HepG2 (cell line): ENCODE measurements at regions of chr2 and their contacts with region 1.

Region 1: GRCh38 chr2:42974721-42975717 is 182.6 kb upstream of the HAAO start:
- DNase-seq: peak; percentile 97
- ATAC-seq: peak; percentile 60
- H3K4me3 ChIP-seq: peak overlapping the region; percentile 8 to 67 (median 42); a peak in 4 of 6 replicates
- H3K27ac ChIP-seq: peak overlapping the region; percentile 93
- H3K4me1 ChIP-seq: peaks cover 99% of the 10 kb centered on the region
- H3K27me3 ChIP-seq: no peaks in the 10 kb centered on the region
- CTCF ChIP-seq: peak; percentile 99
- EP300 ChIP-seq: peak; percentile 63 to 93; a peak in 3 of 4 replicates
- POLR2A ChIP-seq: peak in 1 of 2 experiments; percentile 63; a peak in 2 of 4 replicates
- RAD21 ChIP-seq: peak; percentile 100

Region 2: DNA sequence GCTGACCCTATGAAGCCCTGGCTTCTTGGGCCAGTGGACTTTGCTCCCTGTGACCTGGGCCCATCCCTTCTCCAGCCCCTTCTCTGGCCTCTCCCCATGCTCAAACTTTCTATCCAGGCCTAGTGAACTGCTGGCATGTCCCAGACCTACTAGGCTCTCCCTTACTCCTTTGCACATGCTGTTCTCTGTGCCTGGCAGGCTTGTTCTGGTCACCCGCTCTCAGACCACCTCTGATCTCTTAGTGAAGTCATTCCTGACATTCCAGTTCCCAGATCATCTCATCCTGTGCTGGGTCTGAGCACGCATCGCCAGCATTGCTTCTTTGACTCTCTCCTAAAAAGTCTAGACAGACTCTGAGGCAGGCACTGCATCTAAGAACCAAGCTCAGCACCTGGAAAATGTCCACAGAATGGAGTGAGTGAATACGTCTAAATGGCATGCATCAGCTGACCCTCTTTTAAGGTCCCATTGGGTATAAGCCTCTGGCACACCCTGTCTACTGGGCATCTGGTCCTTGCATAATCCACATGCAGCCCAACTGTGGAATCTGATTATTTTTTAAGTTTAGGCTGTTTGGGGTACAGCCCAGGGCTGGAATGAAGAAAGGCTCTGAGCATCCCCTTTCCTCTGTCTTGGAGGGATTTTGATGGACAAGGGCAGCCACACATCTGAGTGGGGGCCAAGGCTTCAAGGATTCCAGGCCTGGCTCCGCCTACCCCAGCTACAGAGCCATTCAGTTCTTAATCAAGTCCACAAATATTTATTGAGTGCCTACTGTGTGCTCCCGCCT is 52.0 kb before region 1 on chr2:
- CTCF ChIA-PET with region 1: no interaction called
- POLR2A ChIA-PET with region 1: interaction called, 49 read pairs
- in situ Hi-C with region 1: no loop called
- intact Hi-C with region 1: loop called (anchors 2 kb)
- DNase-seq: peak; percentile 42
- ATAC-seq: no peak
- H3K4me3 ChIP-seq: peak overlapping the region in 1 of 3 experiments; percentile 8; a peak in 1 of 6 replicates
- H3K27ac ChIP-seq: no peak overlapping the region
- H3K4me1 ChIP-seq: peaks cover 69% of the 10 kb centered on the region
- H3K27me3 ChIP-seq: peaks cover 0 to 7% of the 10 kb centered on the region in 2 experiments; a peak in 2 of 5 replicates
- CTCF ChIP-seq: no peak
- EP300 ChIP-seq: no peak
- POLR2A ChIP-seq: no peak
- RAD21 ChIP-seq: no peak

Region 3: DNA sequence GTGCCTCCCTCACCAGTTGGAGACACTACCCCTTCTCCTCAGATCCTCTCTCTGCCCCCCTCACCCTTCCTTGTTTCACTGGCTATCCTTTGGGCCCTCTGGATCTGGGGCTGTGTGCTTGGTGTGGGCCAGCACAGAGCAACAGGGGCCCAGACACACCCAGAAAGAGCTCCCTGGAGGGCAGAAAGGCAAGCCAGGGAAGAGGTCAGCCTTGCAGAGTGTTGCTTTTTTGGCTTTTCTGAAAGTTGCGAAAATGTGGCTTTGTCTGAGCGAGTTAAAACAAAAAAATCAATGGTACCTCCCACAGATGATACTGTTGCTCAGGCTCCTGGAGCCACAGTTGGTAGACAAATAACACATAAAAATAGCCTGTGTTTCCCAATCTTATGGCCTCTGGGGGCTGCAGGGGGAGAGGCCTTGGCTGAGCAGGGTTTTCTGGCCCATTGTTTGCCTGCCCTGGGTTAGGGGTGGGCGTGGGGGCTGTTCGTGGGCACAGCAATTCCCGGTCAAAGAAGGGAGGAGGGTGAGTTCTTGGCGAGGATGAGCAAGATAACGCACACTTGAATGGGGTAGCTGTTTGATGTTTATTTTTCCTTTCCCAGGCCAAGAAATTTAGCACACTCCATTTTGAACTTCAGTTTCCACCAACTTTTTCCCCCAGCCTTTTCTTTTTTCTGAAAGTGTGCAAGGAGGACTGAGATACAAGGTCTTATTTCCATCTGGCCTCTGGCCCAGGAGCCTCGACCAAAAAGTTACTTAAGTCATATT is 15.6 kb before region 1 on chr2:
- CTCF ChIA-PET with region 1: no interaction called
- POLR2A ChIA-PET with region 1: interaction called, 98 read pairs
- in situ Hi-C with region 1: no loop called
- intact Hi-C with region 1: loop called (anchors 2 kb)
- DNase-seq: peak; percentile 84
- ATAC-seq: peak; percentile 71
- H3K4me3 ChIP-seq: peak overlapping the region in 2 of 3 experiments; percentile 1 to 35; a peak in 3 of 6 replicates
- H3K27ac ChIP-seq: peak overlapping the region; percentile 55
- H3K4me1 ChIP-seq: peaks cover 86% of the 10 kb centered on the region
- H3K27me3 ChIP-seq: no peaks in the 10 kb centered on the region
- CTCF ChIP-seq: peak; percentile 12; the same call in 1 of the 2 replicates
- EP300 ChIP-seq: peak in 1 of 2 experiments; percentile 89; a peak in 1 of 4 replicates
- POLR2A ChIP-seq: no peak
- RAD21 ChIP-seq: no peak

Region 4: GRCh38 chr2:43018179-43019024 is 43.4 kb after region 1 on chr2:
- CTCF ChIA-PET with region 1: interaction called, 25 read pairs
- POLR2A ChIA-PET with region 1: interaction called, 555 read pairs
- in situ Hi-C with region 1: loop called (anchors 5 kb)
- intact Hi-C with region 1: loop called (anchors 1 kb)
- DNase-seq: peak; percentile 90
- ATAC-seq: peak; percentile 94
- H3K4me3 ChIP-seq: peak overlapping the region in 1 of 3 experiments; percentile 36; a peak in 2 of 6 replicates
- H3K27ac ChIP-seq: peak overlapping the region; percentile 51
- H3K4me1 ChIP-seq: peaks cover 61% of the 10 kb centered on the region
- H3K27me3 ChIP-seq: no peaks in the 10 kb centered on the region
- CTCF ChIP-seq: peak; percentile 60
- EP300 ChIP-seq: peak; percentile 78 to 96; a peak in 3 of 4 replicates
- POLR2A ChIP-seq: peak in 1 of 2 experiments; percentile 52; a peak in 1 of 4 replicates
- RAD21 ChIP-seq: peak; percentile 44

Region 5: DNA sequence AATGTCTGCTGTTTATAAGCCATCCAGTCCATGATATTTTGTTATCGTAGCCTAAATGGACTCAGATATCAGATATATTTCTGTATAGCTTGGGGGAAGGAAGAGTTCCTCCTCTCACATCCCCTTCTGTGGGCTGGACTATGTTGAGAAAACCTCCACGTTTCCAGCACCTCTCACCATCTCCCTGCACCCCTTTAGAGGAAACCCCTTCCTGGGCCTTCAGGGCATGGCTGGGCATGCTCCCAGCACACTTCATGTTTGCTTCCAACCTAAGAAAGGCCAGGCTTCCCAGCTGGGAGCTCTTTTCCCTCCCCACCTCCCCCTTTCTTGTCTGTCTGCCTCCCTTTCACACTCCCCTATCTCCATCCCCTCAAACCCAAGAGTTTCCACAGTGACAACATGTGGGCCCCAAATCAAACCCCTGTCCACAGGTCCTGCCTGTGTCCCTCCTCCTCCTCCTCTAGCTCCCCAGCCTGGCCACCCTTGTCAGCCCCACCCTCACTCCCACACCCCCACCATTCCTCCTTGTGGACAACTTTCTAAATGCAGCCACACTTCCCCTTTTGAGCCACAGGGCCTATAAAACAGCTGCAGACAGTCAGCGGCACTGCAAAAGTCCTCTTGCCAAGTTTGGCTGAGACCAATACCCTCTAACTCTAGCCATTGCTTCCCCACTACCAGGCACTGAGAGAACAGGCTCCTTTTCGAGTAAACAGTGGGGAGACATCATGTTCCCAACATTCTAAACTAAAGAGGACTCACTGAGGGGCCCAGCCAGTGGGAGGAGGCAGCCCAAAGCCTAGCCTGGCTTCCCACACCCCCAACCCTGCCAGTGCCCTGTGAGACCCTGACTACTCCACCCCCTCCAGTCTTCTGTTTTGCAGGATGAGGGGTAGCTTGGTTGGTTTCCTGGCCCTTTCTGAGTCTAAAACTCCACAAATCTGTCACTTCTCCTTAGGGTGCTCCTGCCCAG is 130.9 kb after region 1 on chr2:
- CTCF ChIA-PET with region 1: interaction called, 3 read pairs
- POLR2A ChIA-PET with region 1: interaction called, 18 read pairs
- in situ Hi-C with region 1: no loop called
- intact Hi-C with region 1: loop called (anchors 5 kb)
- DNase-seq: peak; percentile 44
- ATAC-seq: peak; percentile 74
- H3K4me3 ChIP-seq: no peak overlapping the region
- H3K27ac ChIP-seq: no peak overlapping the region
- H3K4me1 ChIP-seq: peaks cover 78% of the 10 kb centered on the region
- H3K27me3 ChIP-seq: no peaks in the 10 kb centered on the region
- CTCF ChIP-seq: peak; percentile 32; the same call in 1 of the 2 replicates
- EP300 ChIP-seq: no peak
- POLR2A ChIP-seq: no peak
- RAD21 ChIP-seq: no peak; the same call in 1 of the 2 replicates

Region 6: GRCh38 chr2:43163584-43164270 is 188.7 kb after region 1 on chr2:
- CTCF ChIA-PET with region 1: interaction called, 3 read pairs
- POLR2A ChIA-PET with region 1: interaction called, 24 read pairs
- in situ Hi-C with region 1: no loop called
- intact Hi-C with region 1: loop called (anchors 1 kb)
- DNase-seq: no peak
- ATAC-seq: no peak
- H3K4me3 ChIP-seq: peak overlapping the region in 1 of 3 experiments; percentile 58; a peak in 1 of 6 replicates
- H3K27ac ChIP-seq: peak overlapping the region; percentile 61
- H3K4me1 ChIP-seq: peaks cover 84% of the 10 kb centered on the region
- H3K27me3 ChIP-seq: no peaks in the 10 kb centered on the region
- CTCF ChIP-seq: no peak
- EP300 ChIP-seq: no peak
- POLR2A ChIP-seq: no peak
- RAD21 ChIP-seq: no peak

Region 7: DNA sequence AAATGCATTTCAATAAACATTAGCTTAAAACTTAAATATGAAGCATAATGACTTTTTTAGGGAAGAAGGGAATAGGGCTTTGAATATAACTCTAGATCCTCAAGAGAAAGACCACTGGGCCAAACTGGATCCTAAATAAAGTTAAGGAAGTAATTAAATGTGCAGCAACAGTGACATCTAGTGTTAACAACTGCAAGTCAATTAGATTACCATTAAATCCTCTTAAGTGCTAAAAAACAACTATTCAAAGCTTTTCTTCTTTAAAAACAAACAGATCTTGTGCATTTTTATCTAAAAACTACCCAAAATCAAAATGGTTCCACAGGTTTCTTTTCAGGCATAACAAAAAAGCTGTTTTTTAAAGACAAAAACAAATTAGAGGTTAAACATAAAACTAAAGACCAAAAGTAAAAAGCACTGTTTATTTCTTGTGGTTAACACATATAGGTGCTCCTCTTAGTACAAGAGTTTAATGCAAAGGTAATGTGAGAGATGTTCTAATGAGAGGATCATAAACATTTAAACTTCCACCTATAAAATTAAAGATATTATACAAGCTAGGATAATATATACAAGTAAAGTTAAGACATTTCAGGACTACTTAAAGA is 509.4 kb after region 1 on chr2:
- CTCF ChIA-PET with region 1: no interaction called
- POLR2A ChIA-PET with region 1: no interaction called
- in situ Hi-C with region 1: no loop called
- intact Hi-C with region 1: loop called (anchors 10 kb)
- DNase-seq: peak; percentile 85
- ATAC-seq: no peak
- H3K4me3 ChIP-seq: no peak overlapping the region
- H3K27ac ChIP-seq: no peak overlapping the region
- H3K4me1 ChIP-seq: peaks cover 15% of the 10 kb centered on the region; the same call in 1 of the 2 replicates
- H3K27me3 ChIP-seq: no peaks in the 10 kb centered on the region
- CTCF ChIP-seq: peak; percentile 79
- EP300 ChIP-seq: no peak
- POLR2A ChIP-seq: no peak
- RAD21 ChIP-seq: peak; percentile 84